ENCODE measurements at regions of chr11 and their contacts with region 1.

Region 1: GRCh38 chr11:96246718-96247552 is 96.1 kb downstream of the MAML2 start:
- DNase-seq: no peak
- H3K4me3 ChIP-seq: no peak overlapping the region
- H3K27ac ChIP-seq: no peak overlapping the region
- H3K4me1 ChIP-seq: no peaks in the 10 kb centered on the region
- H3K27me3 ChIP-seq: no peaks in the 10 kb centered on the region
- CTCF ChIP-seq: no peak
- EP300 ChIP-seq: no peak
- POLR2A ChIP-seq: no peak

Region 2: GRCh38 chr11:94876645-94877442 is 1370.1 kb before region 1 on chr11:
- intact Hi-C with region 1: loop called in 1 of 4 experiments (anchors 5 kb)
- DNase-seq: peak; percentile 79 to 87 (median 83)
- H3K4me3 ChIP-seq: no peak overlapping the region
- H3K27ac ChIP-seq: peak overlapping the region in 1 of 2 donors; percentile 57
- H3K4me1 ChIP-seq: peaks cover 5% of the 10 kb centered on the region
- H3K27me3 ChIP-seq: no peaks in the 10 kb centered on the region
- CTCF ChIP-seq: no peak
- EP300 ChIP-seq: no peak
- POLR2A ChIP-seq: no peak

Region 3: GRCh38 chr11:96188243-96189006 is 58.5 kb before region 1 on chr11:
- intact Hi-C with region 1: no loop called
- DNase-seq: no peak
- H3K4me3 ChIP-seq: no peak overlapping the region
- H3K27ac ChIP-seq: peak overlapping the region in 1 of 2 donors; percentile 17
- H3K4me1 ChIP-seq: peaks cover 4% of the 10 kb centered on the region
- H3K27me3 ChIP-seq: no peaks in the 10 kb centered on the region
- CTCF ChIP-seq: no peak
- EP300 ChIP-seq: no peak
- POLR2A ChIP-seq: no peak

Measured in ovary (tissue), 10 donors.